Transverse colon (tissue), 4 donors: ENCODE measurements at regions of chr2 and their contacts with region 1.

Region 1: DNA sequence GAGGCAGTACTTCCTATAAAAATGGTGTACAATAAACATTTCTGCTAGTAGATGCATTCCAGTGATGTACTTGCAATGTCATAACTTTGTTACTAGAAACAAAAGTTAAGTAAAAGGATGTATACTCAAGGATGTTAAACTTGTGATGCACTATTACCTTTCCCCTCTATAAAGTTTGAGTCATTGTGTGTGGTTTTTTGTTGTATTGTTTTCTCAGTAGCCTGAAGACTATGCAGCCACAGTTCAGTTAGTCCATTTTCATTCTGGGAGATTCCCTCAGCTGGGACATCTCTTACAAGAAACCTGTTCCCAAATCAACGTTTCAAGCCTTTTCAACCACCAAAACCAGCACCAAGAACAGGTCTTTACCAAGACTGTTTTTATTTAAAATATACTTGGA is 5.6 kb downstream of the ATP5MC3 start:
- DNase-seq: no peak
- H3K4me3 ChIP-seq: no peak overlapping the region
- H3K27ac ChIP-seq: no peak overlapping the region
- H3K4me1 ChIP-seq: peaks cover 0 to 21% (median 13%) of the 10 kb centered on the region in 4 donors
- H3K27me3 ChIP-seq: no peaks in the 10 kb centered on the region
- CTCF ChIP-seq: no peak
- EP300 ChIP-seq: no peak
- POLR2A ChIP-seq: no peak

Region 2: GRCh38 chr2:175156534-175156933 is 19.4 kb before region 1 on chr2:
- in situ Hi-C with region 1: no loop called
- intact Hi-C with region 1: loop called (anchors 2 kb)
- DNase-seq: peak; percentile 76
- H3K4me3 ChIP-seq: no peak overlapping the region
- H3K27ac ChIP-seq: peak overlapping the region; percentile 39 to 73 (median 58)
- H3K4me1 ChIP-seq: peaks cover 3 to 31% (median 9%) of the 10 kb centered on the region in 4 donors
- H3K27me3 ChIP-seq: no peaks in the 10 kb centered on the region
- CTCF ChIP-seq: no peak
- EP300 ChIP-seq: no peak
- POLR2A ChIP-seq: no peak